Colonic mucosa (tissue), 4 donors: ENCODE measurements at regions of chr2 and their contacts with region 1.

Region 1: GRCh38 chr2:222912117-222912516 is 51.3 kb downstream of the ACSL3 start:
- DNase-seq: no peak
- H3K4me3 ChIP-seq: no peak overlapping the region
- H3K27ac ChIP-seq: no peak overlapping the region
- H3K4me1 ChIP-seq: no peaks in the 10 kb centered on the region
- H3K27me3 ChIP-seq: no peaks in the 10 kb centered on the region
- CTCF ChIP-seq: no peak

Region 2: DNA sequence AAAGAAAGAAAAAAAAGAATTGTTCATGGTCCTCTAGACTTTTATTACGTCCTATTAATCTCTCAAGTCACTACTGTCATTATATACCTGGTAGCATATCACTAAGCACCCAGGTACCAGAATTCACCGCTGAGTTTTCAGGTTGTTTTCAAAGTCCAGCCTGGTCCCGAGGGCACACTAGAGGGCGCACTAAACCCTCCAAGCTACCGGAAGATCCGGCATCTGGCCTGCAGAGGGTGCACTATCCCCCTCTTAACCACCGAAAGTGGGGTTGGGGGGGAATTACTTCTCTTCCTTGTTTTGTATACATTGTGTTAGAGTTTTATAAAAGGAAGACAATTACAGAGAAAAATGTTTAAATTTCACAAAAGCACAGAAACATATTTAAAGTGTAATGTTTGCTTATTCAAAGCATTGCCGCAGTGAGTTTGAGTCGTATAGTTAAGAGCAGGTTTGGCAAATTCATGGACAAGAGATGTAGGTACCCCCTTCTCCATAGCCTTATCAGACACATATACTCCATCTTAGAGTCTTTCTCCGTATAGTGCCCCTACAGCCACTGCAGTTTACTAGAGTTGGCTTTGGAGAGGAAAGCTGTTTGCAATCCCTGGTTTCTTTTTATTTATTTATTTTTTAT is 221.4 kb before region 1 on chr2:
- intact Hi-C with region 1: loop called (anchors 5 kb)
- DNase-seq: peak; percentile 80
- H3K4me3 ChIP-seq: no peak overlapping the region
- H3K27ac ChIP-seq: no peak overlapping the region
- H3K4me1 ChIP-seq: no peaks in the 10 kb centered on the region
- H3K27me3 ChIP-seq: no peaks in the 10 kb centered on the region
- CTCF ChIP-seq: peak; percentile 97